ENCODE measurements at regions of chr1 and their contacts with region 1.

Region 1: GRCh38 chr1:12448746-12449177 is 169.2 kb downstream of the DHRS3 start:
- DNase-seq: no peak
- ATAC-seq: no peak
- H3K4me3 ChIP-seq: peak overlapping the region; percentile 9
- H3K4me3 Mint-ChIP-seq: peak overlapping the region; percentile 78 to 94 (median 86)
- H3K27ac ChIP-seq: peak overlapping the region; percentile 59
- H3K27ac Mint-ChIP-seq: peak overlapping the region; percentile 76 to 98 (median 94)
- H3K4me1 ChIP-seq: peaks cover 29 to 74% of the 10 kb centered on the region in 2 donors
- H3K4me1 Mint-ChIP-seq: peaks cover 44 to 98% (median 86%) of the 10 kb centered on the region in 7 donors
- H3K27me3 ChIP-seq: no peaks in the 10 kb centered on the region
- H3K27me3 Mint-ChIP-seq: peaks cover 0 to 31% (median 0%) of the 10 kb centered on the region in 5 donors

Region 2: GRCh38 chr1:12344596-12345349 is 104.0 kb before region 1 on chr1:
- CTCF ChIA-PET with region 1: no interaction called
- POLR2A ChIA-PET with region 1: no interaction called
- intact Hi-C with region 1: loop called in 1 of 2 experiments (anchors 5 kb)
- DNase-seq: peak in 6 of 9 donors; percentile 1 to 31 (median 8)
- ATAC-seq: peak; percentile 56
- H3K4me3 ChIP-seq: peak overlapping the region; percentile 22
- H3K4me3 Mint-ChIP-seq: peak overlapping the region; percentile 72 to 87 (median 82)
- H3K27ac ChIP-seq: peak overlapping the region; percentile 64
- H3K27ac Mint-ChIP-seq: peak overlapping the region; percentile 90 to 98 (median 95)
- H3K4me1 ChIP-seq: peaks cover 17 to 38% of the 10 kb centered on the region in 2 donors
- H3K4me1 Mint-ChIP-seq: peaks cover 46 to 64% (median 63%) of the 10 kb centered on the region in 7 donors
- H3K27me3 ChIP-seq: no peaks in the 10 kb centered on the region
- H3K27me3 Mint-ChIP-seq: no peaks in the 10 kb centered on the region

Region 3: DNA sequence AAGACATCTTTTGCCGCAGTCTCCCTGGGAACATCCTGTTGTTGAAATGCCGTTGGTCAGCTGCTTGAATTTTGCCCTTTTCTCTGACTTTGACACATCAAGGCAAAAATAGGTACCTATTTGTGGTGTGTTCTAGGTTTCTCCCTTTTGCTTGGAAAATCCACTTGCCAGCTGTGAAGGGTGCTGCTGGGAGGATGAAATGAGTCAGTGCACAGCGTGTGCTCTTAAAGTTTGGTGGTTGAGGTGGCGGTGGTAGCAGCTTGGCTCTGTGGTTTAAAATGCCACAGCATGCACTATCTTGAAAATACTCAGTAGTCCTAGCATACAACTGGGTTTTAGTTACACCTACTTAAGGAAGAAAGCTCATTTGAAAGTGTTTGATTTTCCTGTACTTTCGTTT is 14.6 kb before region 1 on chr1:
- CTCF ChIA-PET with region 1: interaction called, 12 read pairs
- POLR2A ChIA-PET with region 1: interaction called, 45 read pairs
- intact Hi-C with region 1: loop called (anchors 1 kb)
- DNase-seq: peak in 6 of 9 donors; percentile 32 to 70 (median 46)
- ATAC-seq: peak; percentile 79
- H3K4me3 ChIP-seq: peak overlapping the region; percentile 44
- H3K4me3 Mint-ChIP-seq: peak overlapping the region; percentile 54 to 76 (median 70)
- H3K27ac ChIP-seq: peak overlapping the region; percentile 58
- H3K27ac Mint-ChIP-seq: peak overlapping the region; percentile 69 to 92 (median 84)
- H3K4me1 ChIP-seq: peaks cover 52 to 56% of the 10 kb centered on the region in 2 donors
- H3K4me1 Mint-ChIP-seq: peaks cover 46 to 85% (median 71%) of the 10 kb centered on the region in 7 donors
- H3K27me3 ChIP-seq: no peaks in the 10 kb centered on the region
- H3K27me3 Mint-ChIP-seq: no peaks in the 10 kb centered on the region

Region 4: DNA sequence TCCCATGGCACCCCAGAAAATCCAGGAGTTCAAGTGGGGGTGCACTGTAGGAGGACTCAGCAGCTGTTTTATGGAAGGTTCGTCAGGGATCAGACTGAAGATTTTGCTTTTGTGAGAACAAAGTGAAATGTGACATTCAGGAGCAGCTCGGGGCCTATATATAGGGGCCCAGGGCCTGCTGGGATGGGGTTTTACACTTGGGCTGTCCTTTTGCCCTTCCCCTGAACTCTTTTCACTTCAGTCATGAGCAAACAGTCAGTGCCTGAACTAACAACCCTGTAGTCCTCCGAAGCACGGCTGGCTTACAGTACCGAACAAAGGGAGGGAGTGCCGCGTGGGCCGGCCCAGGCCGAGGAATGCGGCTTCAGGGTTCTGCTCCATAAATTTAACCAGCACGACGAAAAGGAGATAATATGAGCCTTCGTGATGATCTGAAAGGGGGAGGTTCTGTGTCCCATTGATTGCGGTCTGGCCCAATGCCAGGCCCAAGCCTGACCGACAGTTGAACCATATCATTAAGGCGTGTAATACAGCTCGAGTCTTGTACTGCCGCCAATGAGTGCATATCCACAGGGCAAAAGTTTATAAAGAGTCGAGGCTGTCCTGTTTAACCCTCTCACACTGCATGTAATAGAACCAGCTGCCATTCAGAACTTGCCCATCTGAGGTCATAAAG is 29.3 kb after region 1 on chr1:
- CTCF ChIA-PET with region 1: interaction called, 3 read pairs
- POLR2A ChIA-PET with region 1: interaction called, 212 read pairs
- intact Hi-C with region 1: loop called (anchors 1 kb)
- DNase-seq: peak in 1 of 9 donors; percentile 27
- ATAC-seq: peak; percentile 19
- H3K4me3 ChIP-seq: peak overlapping the region; percentile 42
- H3K4me3 Mint-ChIP-seq: peak overlapping the region; percentile 71 to 86 (median 78)
- H3K27ac ChIP-seq: peak overlapping the region; percentile 66
- H3K27ac Mint-ChIP-seq: peak overlapping the region; percentile 89 to 99 (median 96)
- H3K4me1 ChIP-seq: peaks cover 64 to 89% of the 10 kb centered on the region in 2 donors
- H3K4me1 Mint-ChIP-seq: peaks cover 58 to 97% (median 94%) of the 10 kb centered on the region in 7 donors
- H3K27me3 ChIP-seq: no peaks in the 10 kb centered on the region
- H3K27me3 Mint-ChIP-seq: no peaks in the 10 kb centered on the region

Region 5: GRCh38 chr1:12491656-12492055 is 42.9 kb after region 1 on chr1:
- CTCF ChIA-PET with region 1: no interaction called
- POLR2A ChIA-PET with region 1: no interaction called
- intact Hi-C with region 1: no loop called
- DNase-seq: no peak
- ATAC-seq: no peak
- H3K4me3 ChIP-seq: no peak overlapping the region
- H3K4me3 Mint-ChIP-seq: peak overlapping the region in 1 of 10 donors; percentile 33
- H3K27ac ChIP-seq: no peak overlapping the region
- H3K27ac Mint-ChIP-seq: no peak overlapping the region
- H3K4me1 ChIP-seq: peaks cover 0 to 7% of the 10 kb centered on the region in 2 donors
- H3K4me1 Mint-ChIP-seq: peaks cover 2 to 40% (median 29%) of the 10 kb centered on the region in 7 donors
- H3K27me3 ChIP-seq: no peaks in the 10 kb centered on the region
- H3K27me3 Mint-ChIP-seq: no peaks in the 10 kb centered on the region

Region 6: GRCh38 chr1:12604114-12604874 is 155.5 kb after region 1 on chr1:
- CTCF ChIA-PET with region 1: no interaction called
- POLR2A ChIA-PET with region 1: interaction called, 5 read pairs
- intact Hi-C with region 1: loop called in 1 of 2 experiments (anchors 2 kb)
- DNase-seq: peak in 8 of 9 donors; percentile 36 to 78 (median 68)
- ATAC-seq: peak; percentile 90
- H3K4me3 ChIP-seq: no peak overlapping the region
- H3K4me3 Mint-ChIP-seq: peak overlapping the region; percentile 25 to 75 (median 68)
- H3K27ac ChIP-seq: peak overlapping the region; percentile 41
- H3K27ac Mint-ChIP-seq: peak overlapping the region; percentile 78 to 97 (median 88)
- H3K4me1 ChIP-seq: peaks cover 27 to 50% of the 10 kb centered on the region in 2 donors
- H3K4me1 Mint-ChIP-seq: peaks cover 23 to 94% (median 82%) of the 10 kb centered on the region in 7 donors
- H3K27me3 ChIP-seq: no peaks in the 10 kb centered on the region
- H3K27me3 Mint-ChIP-seq: peaks cover 0 to 2% (median 0%) of the 10 kb centered on the region in 5 donors

Region 7: GRCh38 chr1:12658531-12659453 is 210.0 kb after region 1 on chr1:
- CTCF ChIA-PET with region 1: no interaction called
- POLR2A ChIA-PET with region 1: no interaction called
- intact Hi-C with region 1: no loop called
- DNase-seq: peak; percentile 43 to 74 (median 58)
- ATAC-seq: peak; percentile 84
- H3K4me3 ChIP-seq: no peak overlapping the region
- H3K4me3 Mint-ChIP-seq: peak overlapping the region in 2 of 10 donors; percentile 35 to 54
- H3K27ac ChIP-seq: no peak overlapping the region
- H3K27ac Mint-ChIP-seq: peak overlapping the region in 2 of 9 donors; percentile 3 to 43
- H3K4me1 ChIP-seq: no peaks in the 10 kb centered on the region
- H3K4me1 Mint-ChIP-seq: peaks cover 0 to 10% (median 6%) of the 10 kb centered on the region in 7 donors
- H3K27me3 ChIP-seq: no peaks in the 10 kb centered on the region
- H3K27me3 Mint-ChIP-seq: peaks cover 0 to 11% (median 0%) of the 10 kb centered on the region in 5 donors

Measured in naive thymus-derived CD4-positive, alpha-beta T cell (primary cell).